ENCODE measurements at regions of chr20 and their contacts with region 1.

Region 1: GRCh38 chr20:10376270-10377075 is 57.5 kb downstream of the MKKS start:
- DNase-seq: peak; percentile 84
- H3K4me3 ChIP-seq: no peak overlapping the region
- H3K27ac ChIP-seq: peak overlapping the region; percentile 74
- H3K4me1 ChIP-seq: peaks cover 17% of the 10 kb centered on the region
- H3K27me3 ChIP-seq: no peaks in the 10 kb centered on the region
- CTCF ChIP-seq: no peak
- POLR2A ChIP-seq: peak; percentile 26

Region 2: GRCh38 chr20:10192171-10192570 is 184.3 kb before region 1 on chr20:
- CTCF ChIA-PET with region 1: no interaction called
- POLR2A ChIA-PET with region 1: no interaction called
- dilution Hi-C with region 1: no loop called
- intact Hi-C with region 1: no loop called
- DNase-seq: no peak
- H3K4me3 ChIP-seq: no peak overlapping the region
- H3K27ac ChIP-seq: no peak overlapping the region
- H3K4me1 ChIP-seq: no peaks in the 10 kb centered on the region
- H3K27me3 ChIP-seq: peaks cover 1 to 3% of the 10 kb centered on the region in 2 experiments
- CTCF ChIP-seq: no peak
- POLR2A ChIP-seq: no peak

Region 3: GRCh38 chr20:10434832-10435812 is 58.6 kb after region 1 on chr20 and contains the start of gene SLX4IP:
- CTCF ChIA-PET with region 1: interaction called, 3 read pairs
- POLR2A ChIA-PET with region 1: no interaction called
- dilution Hi-C with region 1: no loop called
- intact Hi-C with region 1: loop called (anchors 2 kb)
- DNase-seq: peak; percentile 95
- H3K4me3 ChIP-seq: peak within 1 kb of the TSS; percentile 96 to 99 (median 97)
- H3K27ac ChIP-seq: peak within 1 kb of the TSS; percentile 97
- H3K4me1 ChIP-seq: peaks cover 15% of the 10 kb centered on the region
- H3K27me3 ChIP-seq: no peaks in the 10 kb centered on the region
- CTCF ChIP-seq: no peak
- POLR2A ChIP-seq: peak; percentile 63
- total RNA-seq, gene SLX4IP: 4.1 and 4.5 TPM in 2 replicates

Region 4: DNA sequence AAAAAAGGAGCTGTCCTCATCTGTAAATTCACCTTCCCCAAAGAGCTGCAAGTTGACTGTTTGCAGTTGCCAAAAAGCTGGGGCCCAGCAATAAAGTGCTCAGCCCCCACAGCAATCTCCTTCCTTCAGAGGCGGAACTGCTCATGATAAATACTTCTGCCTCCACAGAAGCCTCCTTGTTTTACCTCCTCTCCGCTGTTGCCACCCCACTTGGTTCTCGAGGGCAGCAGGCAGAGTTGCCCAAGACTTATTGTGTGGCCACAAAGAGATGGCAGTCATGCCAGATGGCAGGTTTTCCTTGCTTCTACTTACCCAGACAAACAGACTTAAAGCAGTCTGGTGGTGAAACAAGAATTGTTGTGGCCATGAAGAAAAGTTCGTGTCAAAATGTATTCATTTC is 124.9 kb after region 1 on chr20:
- CTCF ChIA-PET with region 1: no interaction called
- POLR2A ChIA-PET with region 1: no interaction called
- dilution Hi-C with region 1: no loop called
- intact Hi-C with region 1: no loop called
- DNase-seq: no peak
- H3K4me3 ChIP-seq: no peak overlapping the region
- H3K27ac ChIP-seq: no peak overlapping the region
- H3K4me1 ChIP-seq: peaks cover 6% of the 10 kb centered on the region
- H3K27me3 ChIP-seq: no peaks in the 10 kb centered on the region
- CTCF ChIP-seq: no peak
- POLR2A ChIP-seq: no peak